A673 (cell line): ENCODE measurements at regions of chr6 and their contacts with region 1.

Region 1: GRCh38 chr6:165231581-165232561 is 77.5 kb downstream of the C6orf118 start:
- DNase-seq: peak; percentile 53
- H3K4me3 ChIP-seq: no peak overlapping the region
- H3K27ac ChIP-seq: no peak overlapping the region
- H3K4me1 ChIP-seq: no peaks in the 10 kb centered on the region
- H3K27me3 ChIP-seq: no peaks in the 10 kb centered on the region
- CTCF ChIP-seq: peak; percentile 70

Region 2: DNA sequence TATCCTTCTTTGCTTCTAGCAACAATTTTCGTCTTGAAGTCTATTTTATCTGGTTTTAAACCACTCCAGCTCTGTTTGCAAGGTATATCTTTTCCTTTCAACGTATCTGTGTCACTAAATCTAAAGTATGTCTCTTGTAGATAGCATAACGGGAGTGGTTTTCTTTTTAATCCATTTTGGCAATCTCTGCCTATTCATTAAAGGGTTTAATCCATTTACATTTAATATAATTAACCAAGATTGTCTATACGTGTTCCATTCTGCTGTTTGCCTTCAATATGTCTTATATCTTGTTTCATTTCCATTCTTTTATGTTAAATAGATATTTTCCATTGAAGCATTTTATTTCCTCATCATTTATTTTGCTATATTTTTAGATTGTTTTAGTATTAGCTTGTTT is 510.4 kb before region 1 on chr6:
- CTCF ChIA-PET with region 1: no interaction called
- POLR2A ChIA-PET with region 1: no interaction called
- intact Hi-C with region 1: no loop called
- DNase-seq: no peak
- H3K4me3 ChIP-seq: no peak overlapping the region
- H3K27ac ChIP-seq: no peak overlapping the region
- H3K4me1 ChIP-seq: no peaks in the 10 kb centered on the region
- H3K27me3 ChIP-seq: no peaks in the 10 kb centered on the region
- CTCF ChIP-seq: no peak

Region 3: DNA sequence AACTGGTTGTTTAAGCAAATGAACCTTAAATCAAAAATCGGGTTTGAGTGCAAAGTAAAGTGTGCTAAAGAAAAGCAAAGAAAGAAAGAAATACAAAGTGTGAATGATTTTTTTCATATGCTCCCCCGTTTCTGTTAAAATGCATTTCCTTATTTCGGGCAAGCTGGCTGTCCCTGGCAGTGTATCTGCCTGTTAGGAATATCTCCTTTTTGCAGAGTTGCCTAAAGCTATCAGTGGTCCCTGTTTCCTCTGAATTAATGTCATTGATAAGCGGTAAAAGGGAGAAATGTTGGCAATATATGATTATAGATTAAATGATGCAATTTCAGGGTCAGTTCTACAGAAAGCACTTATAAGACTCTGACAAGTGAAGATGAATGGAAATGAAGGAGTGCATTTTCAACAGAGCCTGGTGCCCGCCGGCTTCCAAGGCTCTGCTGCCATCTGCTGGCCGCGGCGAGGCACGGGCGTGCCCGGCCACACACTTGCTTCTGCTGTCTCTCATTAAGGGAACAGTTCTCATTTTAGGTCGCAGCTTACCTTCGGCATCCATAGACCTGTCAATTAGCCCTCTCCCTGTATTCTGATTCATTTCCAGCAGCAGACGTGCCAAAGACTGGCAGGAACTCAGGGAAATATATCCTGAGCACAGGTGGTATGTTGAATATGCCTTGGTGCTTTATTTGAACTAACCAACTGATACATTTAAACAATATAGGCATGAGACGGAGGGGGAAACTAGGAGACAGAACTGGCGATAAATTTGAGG is 304.4 kb before region 1 on chr6:
- CTCF ChIA-PET with region 1: no interaction called
- POLR2A ChIA-PET with region 1: no interaction called
- intact Hi-C with region 1: loop called (anchors 10 kb)
- DNase-seq: peak; percentile 65
- H3K4me3 ChIP-seq: no peak overlapping the region
- H3K27ac ChIP-seq: no peak overlapping the region
- H3K4me1 ChIP-seq: no peaks in the 10 kb centered on the region
- H3K27me3 ChIP-seq: no peaks in the 10 kb centered on the region
- CTCF ChIP-seq: peak; percentile 94

Region 4: DNA sequence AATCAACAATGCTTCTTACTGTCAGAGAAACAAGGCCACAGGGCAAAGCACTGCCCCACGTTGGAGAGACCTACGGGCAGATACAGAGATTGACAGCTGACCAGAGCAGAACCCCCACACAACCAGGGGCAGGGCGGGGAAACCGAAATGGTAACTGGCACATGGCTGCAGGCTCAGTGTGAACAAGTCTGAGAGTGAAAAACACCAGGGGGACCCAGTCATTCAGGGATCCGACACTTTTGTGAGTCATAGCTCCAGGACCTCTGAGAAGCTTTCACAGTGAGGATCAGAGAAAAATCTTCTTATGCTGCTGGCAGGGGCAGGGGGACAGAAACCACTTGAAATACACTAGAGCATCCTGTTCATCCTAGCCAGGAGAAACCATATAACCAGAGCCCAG is 176.6 kb before region 1 on chr6:
- CTCF ChIA-PET with region 1: interaction called, 5 read pairs
- POLR2A ChIA-PET with region 1: no interaction called
- intact Hi-C with region 1: loop called (anchors 10 kb)
- DNase-seq: peak; percentile 49
- H3K4me3 ChIP-seq: no peak overlapping the region
- H3K27ac ChIP-seq: no peak overlapping the region
- H3K4me1 ChIP-seq: no peaks in the 10 kb centered on the region
- H3K27me3 ChIP-seq: no peaks in the 10 kb centered on the region
- CTCF ChIP-seq: 0 out of 2 replicates have a peak, but pooled peaks have one; percentile 33